ENCODE measurements at regions of chr12 and their contacts with region 1.

Region 1: DNA sequence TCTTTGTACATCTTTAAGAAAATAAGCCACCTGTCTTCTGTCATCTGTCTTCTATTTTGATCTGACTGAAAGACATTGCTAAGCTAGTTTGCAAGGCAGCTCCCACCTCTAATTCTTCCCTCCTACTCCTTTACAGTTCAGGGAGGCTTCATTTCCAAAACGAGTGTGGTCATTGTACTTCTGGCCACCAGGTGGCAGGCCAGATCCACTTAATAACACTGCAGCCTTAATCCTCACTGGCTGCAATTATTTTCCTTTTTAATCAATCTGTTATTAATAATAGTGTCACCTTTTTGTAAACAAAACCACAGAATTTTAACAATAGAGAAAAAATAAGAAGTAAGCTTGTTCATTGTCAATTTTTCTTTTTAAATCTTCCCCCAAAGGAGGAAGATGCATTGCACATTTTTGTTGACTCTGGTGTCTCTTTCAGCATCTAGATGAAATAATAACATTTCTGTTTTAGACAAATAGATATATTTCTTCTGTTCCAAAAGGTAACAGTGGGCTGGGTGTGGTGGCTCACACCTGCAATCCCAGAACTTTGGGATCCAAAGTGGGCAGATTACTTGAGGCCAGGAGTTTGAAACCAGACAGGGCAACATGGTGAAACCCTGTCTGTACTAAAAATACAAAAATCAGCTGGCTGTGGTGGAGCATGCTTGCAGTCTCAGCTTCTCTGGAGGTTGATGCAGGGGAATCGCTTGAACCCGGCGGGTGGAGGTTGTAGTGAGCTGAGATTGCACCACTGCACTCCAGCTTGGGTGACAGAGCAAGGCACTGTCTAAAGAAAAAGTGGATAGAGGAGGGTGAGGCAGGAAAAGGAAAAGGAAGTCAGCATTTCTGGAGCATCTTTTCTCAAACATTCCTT is 23.3 kb downstream of the GABARAPL1 start:
- DNase-seq: peak; percentile 67
- ATAC-seq: peak; percentile 62
- H3K4me3 ChIP-seq: no peak overlapping the region
- H3K4me3 Mint-ChIP-seq: no peak overlapping the region
- H3K27ac ChIP-seq: no peak overlapping the region
- H3K27ac Mint-ChIP-seq: no peak overlapping the region
- H3K4me1 ChIP-seq: no peaks in the 10 kb centered on the region
- H3K4me1 Mint-ChIP-seq: no peaks in the 10 kb centered on the region
- H3K27me3 ChIP-seq: peaks cover 0 to 7% (median 2%) of the 10 kb centered on the region in 4 experiments
- H3K27me3 Mint-ChIP-seq: peaks cover 8% of the 10 kb centered on the region
- CTCF ChIP-seq: peak; percentile 94

Region 2: DNA sequence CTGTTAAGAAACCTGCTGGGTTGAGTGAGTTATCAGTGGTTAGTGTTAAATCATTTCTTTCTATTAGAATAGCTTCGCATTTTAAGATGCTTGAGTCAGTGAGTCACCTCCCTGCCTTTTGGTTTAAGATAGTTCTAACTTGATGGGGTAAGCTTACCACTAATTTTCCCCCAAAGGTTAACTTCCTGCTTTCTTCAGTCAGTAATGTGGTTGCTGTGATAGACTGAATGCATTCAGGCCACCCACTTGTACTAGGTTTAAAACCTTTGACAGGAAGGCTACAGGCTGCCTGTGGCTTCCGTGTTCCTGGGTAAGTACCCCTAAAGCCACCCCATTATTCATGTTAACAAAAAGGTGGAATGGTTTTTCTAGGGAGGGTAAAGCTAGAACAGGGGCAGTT is 329.1 kb before region 1 on chr12:
- CTCF ChIA-PET with region 1: no interaction called
- POLR2A ChIA-PET with region 1: no interaction called
- intact Hi-C with region 1: no loop called
- DNase-seq: no peak
- ATAC-seq: peak; percentile 51
- H3K4me3 ChIP-seq: no peak overlapping the region
- H3K4me3 Mint-ChIP-seq: no peak overlapping the region
- H3K27ac ChIP-seq: no peak overlapping the region
- H3K27ac Mint-ChIP-seq: no peak overlapping the region
- H3K4me1 ChIP-seq: peaks cover 3 to 4% of the 10 kb centered on the region in 2 donors
- H3K4me1 Mint-ChIP-seq: peaks cover 8% of the 10 kb centered on the region
- H3K27me3 ChIP-seq: no peaks in the 10 kb centered on the region
- H3K27me3 Mint-ChIP-seq: peaks cover 6% of the 10 kb centered on the region
- CTCF ChIP-seq: no peak

Region 3: GRCh38 chr12:10673660-10674384 is 437.8 kb after region 1 on chr12 and contains the start of gene STYK1:
- CTCF ChIA-PET with region 1: interaction called, 3 read pairs
- POLR2A ChIA-PET with region 1: no interaction called
- intact Hi-C with region 1: loop called (anchors 10 kb)
- DNase-seq: peak; percentile 65
- ATAC-seq: peak; percentile 36
- H3K4me3 ChIP-seq: peak within 1 kb of the TSS; percentile 15 to 49 (median 41)
- H3K4me3 Mint-ChIP-seq: peak within 1 kb of the TSS; percentile 79
- H3K27ac ChIP-seq: no peak within 1 kb of the TSS
- H3K27ac Mint-ChIP-seq: no peak within 1 kb of the TSS
- H3K4me1 ChIP-seq: peaks cover 16 to 30% of the 10 kb centered on the region in 2 donors
- H3K4me1 Mint-ChIP-seq: peaks cover 21% of the 10 kb centered on the region
- H3K27me3 ChIP-seq: peaks cover 0 to 19% (median 14%) of the 10 kb centered on the region in 4 experiments
- H3K27me3 Mint-ChIP-seq: peaks cover 52% of the 10 kb centered on the region
- CTCF ChIP-seq: peak; percentile 78
- total RNA-seq, gene STYK1: not detected in 2 replicates

Region 4: GRCh38 chr12:10749700-10750384 is 513.8 kb after region 1 on chr12:
- CTCF ChIA-PET with region 1: interaction called, 3 read pairs
- POLR2A ChIA-PET with region 1: no interaction called
- intact Hi-C with region 1: loop called (anchors 1 kb)
- DNase-seq: peak; percentile 85
- ATAC-seq: peak; percentile 98
- H3K4me3 ChIP-seq: peak overlapping the region in 3 of 5 experiments; percentile 31 to 41 (median 34)
- H3K4me3 Mint-ChIP-seq: peak overlapping the region; percentile 72
- H3K27ac ChIP-seq: no peak overlapping the region
- H3K27ac Mint-ChIP-seq: no peak overlapping the region
- H3K4me1 ChIP-seq: peaks cover 5 to 9% of the 10 kb centered on the region in 2 donors
- H3K4me1 Mint-ChIP-seq: peaks cover 9% of the 10 kb centered on the region
- H3K27me3 ChIP-seq: peaks cover 0 to 5% (median 2%) of the 10 kb centered on the region in 4 experiments
- H3K27me3 Mint-ChIP-seq: peaks cover 32% of the 10 kb centered on the region
- CTCF ChIP-seq: peak; percentile 90

Region 5: GRCh38 chr12:11202811-11203210 is 966.8 kb after region 1 on chr12:
- CTCF ChIA-PET with region 1: interaction called, 6 read pairs
- POLR2A ChIA-PET with region 1: no interaction called
- intact Hi-C with region 1: loop called (anchors 10 kb)
- DNase-seq: no peak
- ATAC-seq: no peak
- H3K4me3 ChIP-seq: no peak overlapping the region
- H3K4me3 Mint-ChIP-seq: no peak overlapping the region
- H3K27ac ChIP-seq: no peak overlapping the region
- H3K27ac Mint-ChIP-seq: no peak overlapping the region
- H3K4me1 ChIP-seq: no peaks in the 10 kb centered on the region
- H3K4me1 Mint-ChIP-seq: no peaks in the 10 kb centered on the region
- H3K27me3 ChIP-seq: no peaks in the 10 kb centered on the region
- H3K27me3 Mint-ChIP-seq: no peaks in the 10 kb centered on the region
- CTCF ChIP-seq: no peak

Measured in B cell (primary cell).